ENCODE measurements at regions of chr19 and their contacts with region 1.

Region 1: DNA sequence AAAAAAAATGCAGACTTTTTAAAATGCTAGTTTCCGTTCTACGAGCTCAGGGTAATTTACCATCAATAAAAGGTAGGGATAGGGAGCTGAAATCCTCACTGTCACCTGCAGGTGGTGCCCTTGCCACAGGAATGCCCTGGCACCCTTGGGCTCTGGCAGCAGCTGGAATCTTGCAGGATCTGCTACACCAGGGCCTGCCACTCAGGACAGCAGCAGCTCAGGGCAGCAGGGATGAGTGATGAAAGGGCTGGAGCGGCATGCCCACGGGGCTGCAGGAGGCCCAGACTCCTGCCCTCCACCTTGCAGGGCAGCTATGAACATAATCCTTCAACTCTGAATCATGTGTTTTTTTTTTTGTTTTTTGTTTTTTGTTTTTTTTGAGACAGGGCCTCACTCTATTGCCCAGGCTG is 54.0 kb downstream of the GNG7 start:
- DNase-seq: peak; percentile 87
- ATAC-seq: peak; percentile 81
- H3K4me3 ChIP-seq: no peak overlapping the region
- H3K4me3 Mint-ChIP-seq: no peak overlapping the region
- H3K27ac ChIP-seq: no peak overlapping the region
- H3K27ac Mint-ChIP-seq: peak overlapping the region; percentile 50
- H3K4me1 ChIP-seq: peaks cover 8 to 38% of the 10 kb centered on the region in 2 donors
- H3K4me1 Mint-ChIP-seq: peaks cover 47% of the 10 kb centered on the region
- H3K27me3 ChIP-seq: no peaks in the 10 kb centered on the region
- H3K27me3 Mint-ChIP-seq: no peaks in the 10 kb centered on the region
- CTCF ChIP-seq: peak; percentile 93

Region 2: DNA sequence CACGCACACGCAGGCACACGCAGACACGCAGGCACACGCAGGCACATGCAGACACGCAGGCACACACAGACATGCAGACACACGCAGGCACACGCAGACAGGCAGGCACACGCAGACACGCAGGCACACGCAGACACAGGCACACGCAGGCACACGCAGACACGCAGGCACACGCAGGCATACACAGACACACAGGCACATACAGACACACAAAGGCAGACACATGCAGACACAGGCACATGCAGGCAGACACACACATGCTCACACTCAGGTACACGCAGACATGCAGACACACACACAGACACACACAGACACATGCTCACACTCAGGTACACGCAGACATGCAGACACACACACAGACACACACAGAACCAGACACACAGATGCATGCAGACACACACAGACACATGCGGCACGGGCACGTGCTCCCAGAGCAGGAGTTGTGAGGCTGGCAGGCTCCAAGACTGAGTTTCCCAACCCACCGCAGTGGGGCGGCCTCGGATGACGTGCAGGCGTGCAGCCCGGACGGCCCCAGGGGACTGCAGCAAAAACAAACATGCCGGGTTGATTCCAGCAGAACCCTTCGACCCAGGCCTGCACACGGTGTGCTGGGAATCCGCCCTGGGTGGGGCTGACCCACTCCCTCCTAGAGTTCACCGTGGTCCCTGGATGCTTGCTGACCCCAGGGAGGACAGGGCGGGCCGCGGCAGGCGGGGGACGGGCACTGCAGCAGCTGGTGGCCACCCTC is 72.6 kb before region 1 on chr19:
- CTCF ChIA-PET with region 1: no interaction called
- POLR2A ChIA-PET with region 1: no interaction called
- intact Hi-C with region 1: no loop called
- DNase-seq: no peak
- ATAC-seq: no peak
- H3K4me3 ChIP-seq: no peak overlapping the region
- H3K4me3 Mint-ChIP-seq: no peak overlapping the region
- H3K27ac ChIP-seq: no peak overlapping the region
- H3K27ac Mint-ChIP-seq: peak overlapping the region; percentile 5
- H3K4me1 ChIP-seq: peaks cover 13 to 15% of the 10 kb centered on the region in 2 donors
- H3K4me1 Mint-ChIP-seq: peaks cover 22% of the 10 kb centered on the region
- H3K27me3 ChIP-seq: no peaks in the 10 kb centered on the region
- H3K27me3 Mint-ChIP-seq: no peaks in the 10 kb centered on the region
- CTCF ChIP-seq: no peak

Region 3: GRCh38 chr19:2663920-2664571 is 15.5 kb after region 1 on chr19:
- CTCF ChIA-PET with region 1: interaction called, 35 read pairs
- POLR2A ChIA-PET with region 1: interaction called, 3 read pairs
- intact Hi-C with region 1: loop called (anchors 2 kb)
- DNase-seq: peak; percentile 95
- ATAC-seq: peak; percentile 86
- H3K4me3 ChIP-seq: no peak overlapping the region
- H3K4me3 Mint-ChIP-seq: peak overlapping the region; percentile 78
- H3K27ac ChIP-seq: peak overlapping the region; percentile 92
- H3K27ac Mint-ChIP-seq: peak overlapping the region; percentile 98
- H3K4me1 ChIP-seq: peaks cover 35 to 43% of the 10 kb centered on the region in 2 donors
- H3K4me1 Mint-ChIP-seq: peaks cover 59% of the 10 kb centered on the region
- H3K27me3 ChIP-seq: no peaks in the 10 kb centered on the region
- H3K27me3 Mint-ChIP-seq: no peaks in the 10 kb centered on the region
- CTCF ChIP-seq: peak; percentile 75

Region 4: DNA sequence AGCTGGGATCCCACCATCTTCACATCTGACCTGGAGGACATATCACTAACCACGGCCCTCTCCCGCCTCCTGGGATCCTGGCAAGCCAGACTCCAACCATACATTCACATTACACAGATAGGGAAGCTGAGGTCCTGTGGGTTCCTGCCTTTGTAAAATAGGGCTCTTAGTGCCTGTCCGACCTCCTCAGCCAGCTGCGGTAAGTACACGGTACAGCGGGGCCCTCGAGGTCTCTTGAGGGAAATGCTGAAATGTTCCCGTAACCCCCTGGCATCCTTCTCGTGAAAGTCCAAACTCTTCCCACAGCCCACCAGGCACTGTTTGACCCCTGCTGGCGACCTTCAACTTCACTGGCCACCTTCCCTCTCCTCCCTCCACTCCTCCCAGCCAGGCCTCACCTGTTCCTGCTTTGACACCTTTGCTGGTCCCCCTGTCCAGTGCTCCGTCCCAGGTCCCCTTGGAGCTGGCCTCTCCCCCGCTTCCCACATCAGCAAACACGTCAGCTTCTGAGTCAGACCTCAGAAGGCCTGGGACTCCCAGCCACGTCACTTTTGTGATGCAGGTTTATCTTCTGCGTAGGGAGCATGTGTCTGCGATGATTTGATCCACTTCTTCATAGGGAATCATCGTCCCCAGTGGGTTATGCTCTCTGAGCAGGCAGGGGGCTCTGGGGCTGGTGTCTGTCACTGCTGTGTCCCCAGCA is 62.8 kb after region 1 on chr19:
- CTCF ChIA-PET with region 1: interaction called, 11 read pairs
- POLR2A ChIA-PET with region 1: no interaction called
- intact Hi-C with region 1: no loop called
- DNase-seq: peak; percentile 76
- ATAC-seq: no peak
- H3K4me3 ChIP-seq: peak overlapping the region in 2 of 5 experiments; percentile 7 to 22
- H3K4me3 Mint-ChIP-seq: peak overlapping the region; percentile 73
- H3K27ac ChIP-seq: peak overlapping the region; percentile 84 to 97
- H3K27ac Mint-ChIP-seq: peak overlapping the region; percentile 96
- H3K4me1 ChIP-seq: peaks cover 26 to 40% of the 10 kb centered on the region in 2 donors
- H3K4me1 Mint-ChIP-seq: peaks cover 40% of the 10 kb centered on the region
- H3K27me3 ChIP-seq: no peaks in the 10 kb centered on the region
- H3K27me3 Mint-ChIP-seq: no peaks in the 10 kb centered on the region
- CTCF ChIP-seq: no peak

Region 5: GRCh38 chr19:2739602-2740313 is 91.2 kb after region 1 on chr19 and contains the start of gene SLC39A3:
- CTCF ChIA-PET with region 1: interaction called, 20 read pairs
- POLR2A ChIA-PET with region 1: interaction called, 4 read pairs
- intact Hi-C with region 1: no loop called
- DNase-seq: peak; percentile 98
- ATAC-seq: peak; percentile 100
- H3K4me3 ChIP-seq: peak within 1 kb of the TSS; percentile 50 to 93 (median 87)
- H3K4me3 Mint-ChIP-seq: peak within 1 kb of the TSS; percentile 92
- H3K27ac ChIP-seq: peak within 1 kb of the TSS; percentile 26 to 77
- H3K27ac Mint-ChIP-seq: peak within 1 kb of the TSS; percentile 81
- H3K4me1 ChIP-seq: peaks cover 10 to 20% of the 10 kb centered on the region in 2 donors
- H3K4me1 Mint-ChIP-seq: peaks cover 25% of the 10 kb centered on the region
- H3K27me3 ChIP-seq: no peaks in the 10 kb centered on the region
- H3K27me3 Mint-ChIP-seq: peaks cover 10% of the 10 kb centered on the region
- CTCF ChIP-seq: no peak
- total RNA-seq, gene SLC39A3: 32.8 and 36.4 TPM in 2 replicates

Region 6: GRCh38 chr19:2782936-2783780 is 134.6 kb after region 1 on chr19 and contains the start of gene SGTA:
- CTCF ChIA-PET with region 1: interaction called, 6 read pairs
- POLR2A ChIA-PET with region 1: no interaction called
- intact Hi-C with region 1: loop called (anchors 1 kb)
- DNase-seq: peak; percentile 98
- ATAC-seq: peak; percentile 67
- H3K4me3 ChIP-seq: peak within 1 kb of the TSS; percentile 62 to 99 (median 93)
- H3K4me3 Mint-ChIP-seq: peak within 1 kb of the TSS; percentile 91
- H3K27ac ChIP-seq: peak within 1 kb of the TSS; percentile 83 to 95
- H3K27ac Mint-ChIP-seq: peak within 1 kb of the TSS; percentile 97
- H3K4me1 ChIP-seq: peaks cover 23 to 39% of the 10 kb centered on the region in 2 donors
- H3K4me1 Mint-ChIP-seq: peaks cover 60% of the 10 kb centered on the region
- H3K27me3 ChIP-seq: no peaks in the 10 kb centered on the region
- H3K27me3 Mint-ChIP-seq: no peaks in the 10 kb centered on the region
- CTCF ChIP-seq: peak; percentile 59
- total RNA-seq, gene SGTA: 36.6 and 39.8 TPM in 2 replicates